WTC11 (cell line): ENCODE measurements at regions of chr2 and their contacts with region 1.

Region 1: GRCh38 chr2:20015472-20016083 is 3.1 kb upstream of the MATN3 start:
- DNase-seq: no peak
- ATAC-seq: no peak
- H3K4me3 Mint-ChIP-seq: no peak overlapping the region
- H3K27ac Mint-ChIP-seq: no peak overlapping the region
- H3K4me1 Mint-ChIP-seq: peaks cover 15% of the 10 kb centered on the region
- H3K27me3 Mint-ChIP-seq: peaks cover 38% of the 10 kb centered on the region
- CTCF ChIP-seq: peak; percentile 38

Region 2: DNA sequence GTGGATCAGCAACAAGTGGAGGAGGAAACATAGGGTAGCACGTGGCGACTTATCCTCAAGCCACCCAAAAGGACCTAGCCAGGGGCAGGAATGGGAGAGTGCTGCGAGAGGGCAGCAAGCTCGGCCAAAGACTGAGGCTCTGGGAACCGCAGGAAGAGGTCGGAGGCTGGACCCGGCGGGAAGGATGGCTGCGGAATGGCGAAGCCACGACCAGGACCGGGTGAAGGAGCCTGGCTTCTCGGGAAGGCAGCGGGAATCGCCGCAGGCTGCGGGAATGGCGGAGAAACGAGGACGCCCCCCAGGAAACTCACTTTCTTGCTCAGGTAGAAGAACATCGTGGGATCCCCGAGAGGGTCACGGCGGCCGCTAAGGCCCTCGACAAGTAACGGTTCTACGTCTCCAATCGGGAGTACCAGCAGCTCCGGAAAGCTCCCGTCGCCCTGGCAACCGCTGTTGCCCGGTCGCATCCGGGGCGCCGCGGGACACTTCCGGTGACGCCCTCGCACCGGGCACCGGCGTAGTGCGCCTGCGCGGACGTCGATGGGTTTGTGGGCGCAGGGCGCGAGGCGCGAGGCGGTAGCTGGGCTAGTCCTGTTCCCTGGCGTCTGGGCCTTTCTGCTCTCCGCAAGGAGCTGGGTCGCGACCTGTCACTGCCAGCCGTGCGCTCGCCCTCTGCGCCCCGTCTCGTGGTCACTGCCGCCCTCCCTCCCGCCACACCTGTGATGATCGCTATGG is 25.7 kb before region 1 on chr2 and contains the start of gene WDR35:
- CTCF ChIA-PET with region 1: interaction called, 21 read pairs
- POLR2A ChIA-PET with region 1: interaction called, 9 read pairs
- DNase-seq: peak; percentile 96
- ATAC-seq: peak; percentile 95
- H3K4me3 Mint-ChIP-seq: peak within 1 kb of the TSS; percentile 92
- H3K27ac Mint-ChIP-seq: peak within 1 kb of the TSS; percentile 93
- H3K4me1 Mint-ChIP-seq: peaks cover 26% of the 10 kb centered on the region
- H3K27me3 Mint-ChIP-seq: peaks cover 2% of the 10 kb centered on the region; the same call in 1 of the 2 replicates
- CTCF ChIP-seq: no peak
- total RNA-seq, gene WDR35: 15.4 to 16.5 TPM (median 15.5 TPM) in 3 replicates

Region 3: DNA sequence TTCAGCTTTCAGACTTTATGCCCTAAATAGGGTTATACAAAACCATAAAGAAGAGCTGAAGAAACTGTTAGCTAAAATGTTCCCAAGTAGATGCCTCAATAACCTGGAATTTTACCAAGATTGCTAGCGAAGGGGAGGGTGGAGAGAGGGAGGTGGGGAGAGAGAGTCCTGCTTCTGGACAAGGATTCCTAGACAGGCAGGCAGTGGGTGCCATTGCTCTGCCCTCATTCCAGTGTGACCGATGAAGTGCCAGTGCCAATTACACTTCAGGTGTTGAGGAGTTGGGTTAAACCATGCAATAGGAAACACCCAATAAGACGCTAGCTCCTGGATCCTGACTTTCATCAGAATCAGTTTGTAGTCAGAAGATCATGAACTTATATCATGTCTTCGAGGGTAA is 17.8 kb after region 1 on chr2:
- CTCF ChIA-PET with region 1: interaction called, 14 read pairs
- POLR2A ChIA-PET with region 1: no interaction called
- DNase-seq: no peak
- ATAC-seq: no peak
- H3K4me3 Mint-ChIP-seq: no peak overlapping the region
- H3K27ac Mint-ChIP-seq: no peak overlapping the region
- H3K4me1 Mint-ChIP-seq: no peaks in the 10 kb centered on the region
- H3K27me3 Mint-ChIP-seq: no peaks in the 10 kb centered on the region
- CTCF ChIP-seq: no peak

Region 4: DNA sequence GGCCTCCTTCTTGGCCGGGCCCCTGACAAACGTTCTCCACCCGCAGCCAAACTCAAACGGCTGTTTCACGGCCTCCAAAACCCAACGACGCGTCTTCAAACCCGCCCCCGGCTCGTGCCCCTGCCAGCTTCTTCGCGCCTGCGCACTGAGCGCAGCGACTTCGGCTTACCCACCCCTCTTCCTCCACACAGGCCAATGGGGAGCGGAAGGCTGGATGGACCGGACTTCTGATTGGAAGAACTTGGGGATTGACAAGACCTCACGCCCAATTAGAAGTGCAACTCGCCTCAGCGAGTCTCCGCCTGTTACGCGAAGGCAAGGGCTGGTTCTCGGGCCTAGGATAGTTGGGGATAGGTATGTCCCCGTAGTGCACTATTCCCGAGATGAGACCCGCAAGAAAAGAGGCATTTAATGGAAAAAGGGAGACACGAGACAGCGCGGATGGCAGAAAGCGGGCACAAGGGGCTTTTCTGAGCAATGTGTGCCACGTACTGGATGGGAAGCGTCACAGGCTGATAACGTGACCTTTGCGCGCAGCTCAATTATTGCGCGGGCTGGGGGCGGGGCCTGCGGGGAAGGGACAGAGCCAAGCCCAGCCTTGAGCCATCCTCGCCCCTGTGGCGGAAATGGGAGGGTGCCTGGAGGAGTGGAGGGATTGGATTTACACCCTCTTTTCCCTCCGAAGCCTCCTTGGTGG is 36.1 kb after region 1 on chr2 and contains the start of gene LAPTM4A:
- CTCF ChIA-PET with region 1: interaction called, 62 read pairs
- POLR2A ChIA-PET with region 1: interaction called, 8 read pairs
- DNase-seq: peak; percentile 98
- ATAC-seq: peak; percentile 97
- H3K4me3 Mint-ChIP-seq: no peak within 1 kb of the TSS
- H3K27ac Mint-ChIP-seq: no peak within 1 kb of the TSS; the same call in 1 of the 2 replicates
- H3K4me1 Mint-ChIP-seq: peaks cover 25% of the 10 kb centered on the region
- H3K27me3 Mint-ChIP-seq: peaks cover 7% of the 10 kb centered on the region
- CTCF ChIP-seq: no peak
- total RNA-seq, gene LAPTM4A: 163 to 166 TPM (median 165 TPM) in 3 replicates

Region 5: DNA sequence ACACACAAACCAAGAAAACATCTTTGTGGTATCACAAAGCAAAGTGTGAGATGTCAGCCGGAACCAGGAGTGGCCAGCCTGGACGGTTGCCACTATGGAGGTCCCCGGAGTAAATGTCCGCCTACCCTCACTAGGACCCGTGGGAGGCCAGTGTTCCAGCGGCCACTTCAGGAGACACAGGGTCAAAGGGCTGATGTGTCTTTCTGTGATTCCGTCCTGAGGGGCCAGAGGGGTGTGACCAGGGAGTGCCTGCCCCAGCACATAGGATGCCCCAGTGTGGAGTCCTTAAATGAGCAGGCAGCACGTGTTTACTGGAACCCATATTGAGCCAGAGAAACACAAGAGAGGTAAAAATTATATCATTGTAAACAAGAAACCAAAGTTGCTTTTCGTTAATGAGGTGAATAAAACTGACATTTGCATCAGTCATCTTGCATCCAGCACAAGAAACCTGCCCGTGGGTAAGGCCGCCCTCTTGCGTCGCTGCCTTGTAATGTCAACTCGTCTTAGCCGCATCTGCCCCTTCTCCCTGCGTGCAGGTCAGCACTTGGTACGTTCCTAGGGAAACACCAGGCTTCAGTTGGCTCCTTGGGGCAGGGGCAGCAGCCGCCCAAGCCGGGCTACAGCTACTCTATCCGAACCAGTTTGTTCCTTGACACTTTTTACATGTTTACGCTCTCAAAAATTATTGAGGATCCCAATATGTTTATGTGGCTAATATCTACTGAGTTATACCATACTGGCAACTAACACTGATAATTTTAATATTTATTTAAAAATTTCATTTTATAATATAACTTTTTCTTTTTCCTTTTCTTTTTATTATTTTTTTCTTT is 82.5 kb after region 1 on chr2:
- CTCF ChIA-PET with region 1: interaction called, 46 read pairs
- POLR2A ChIA-PET with region 1: no interaction called
- DNase-seq: peak; percentile 88
- ATAC-seq: peak; percentile 89
- H3K4me3 Mint-ChIP-seq: no peak overlapping the region
- H3K27ac Mint-ChIP-seq: no peak overlapping the region
- H3K4me1 Mint-ChIP-seq: peaks cover 17% of the 10 kb centered on the region
- H3K27me3 Mint-ChIP-seq: peaks cover 10% of the 10 kb centered on the region
- CTCF ChIP-seq: peak; percentile 66

Region 6: GRCh38 chr2:20225294-20226151 is 209.9 kb after region 1 on chr2:
- CTCF ChIA-PET with region 1: interaction called, 10 read pairs
- POLR2A ChIA-PET with region 1: no interaction called
- DNase-seq: peak; percentile 78
- ATAC-seq: peak; percentile 57
- H3K4me3 Mint-ChIP-seq: peak overlapping the region; percentile 67
- H3K27ac Mint-ChIP-seq: peak overlapping the region; percentile 95
- H3K4me1 Mint-ChIP-seq: peaks cover 32% of the 10 kb centered on the region
- H3K27me3 Mint-ChIP-seq: peaks cover 17% of the 10 kb centered on the region
- CTCF ChIP-seq: no peak